Dorsolateral prefrontal cortex (tissue), 120 donors: ENCODE measurements at regions of chr7 and their contacts with region 1.

Region 1: DNA sequence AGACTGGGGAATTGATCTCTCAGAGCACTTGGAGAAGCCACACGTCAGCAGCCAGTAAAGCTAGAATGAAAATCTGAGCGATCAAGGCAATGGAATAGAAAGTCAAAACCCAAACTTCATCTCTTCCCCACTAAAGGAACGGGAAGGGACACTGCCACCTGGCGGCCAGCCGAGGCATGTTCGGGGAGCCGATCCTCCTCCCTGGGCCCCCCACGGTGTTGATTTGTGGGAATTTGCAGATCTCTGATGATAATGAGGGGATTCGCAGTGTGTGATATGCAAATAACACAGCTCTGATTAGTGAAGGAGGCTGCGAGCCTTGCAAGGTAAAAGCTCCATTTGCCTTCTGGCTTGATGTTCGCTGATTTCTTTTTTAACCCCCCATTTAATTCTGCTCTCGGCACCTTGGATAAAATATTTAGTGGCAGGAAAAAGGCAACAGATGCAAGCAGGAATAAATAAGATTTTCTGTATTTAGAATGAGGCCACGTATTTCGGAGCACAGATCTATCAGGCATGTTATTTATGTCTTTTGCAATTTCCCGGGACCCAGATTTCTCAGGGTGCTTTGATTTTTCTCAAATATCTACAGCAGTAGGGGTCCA is 258.6 kb downstream of the PAXIP1 start:
- DNase-seq: peak in 9 of 10 donors; percentile 70 to 84 (median 79)
- H3K4me3 ChIP-seq: peak overlapping the region in 6 of 59 donors; percentile 3 to 34 (median 6)
- H3K27ac ChIP-seq: peak overlapping the region in 54 of 59 donors; percentile 6 to 95 (median 78)
- H3K27me3 ChIP-seq: no peaks in the 10 kb centered on the region
- CTCF ChIP-seq: peak; percentile 64 to 96 (median 90)

Region 2: DNA sequence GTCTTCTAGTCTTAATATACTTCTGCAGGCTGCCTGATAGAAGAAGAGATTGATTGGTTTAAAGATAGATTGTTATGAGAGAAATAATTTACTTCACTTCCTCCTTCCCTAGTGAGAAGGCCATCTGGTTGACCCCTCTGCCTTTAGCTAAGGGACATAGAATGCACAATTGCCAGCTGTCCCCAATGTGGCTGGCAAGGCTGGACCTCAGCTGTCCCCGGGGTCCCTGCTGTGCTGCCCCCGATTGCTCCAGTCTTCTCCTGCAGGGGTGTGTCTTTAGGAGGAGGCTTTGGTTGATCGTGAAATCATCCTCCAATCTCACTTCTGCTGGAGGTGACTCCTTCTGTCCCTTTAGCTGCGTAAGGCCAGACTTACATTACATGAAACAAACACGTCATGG is 303.7 kb before region 1 on chr7:
- intact Hi-C with region 1: no loop called
- DNase-seq: peak in 1 of 10 donors; percentile 35
- H3K4me3 ChIP-seq: no peak overlapping the region
- H3K27ac ChIP-seq: no peak overlapping the region
- H3K27me3 ChIP-seq: no peaks in the 10 kb centered on the region
- CTCF ChIP-seq: no peak

Region 3: GRCh38 chr7:154503962-154504550 is 240.3 kb before region 1 on chr7:
- intact Hi-C with region 1: loop called in 1 of 2 experiments (anchors 10 kb)
- DNase-seq: no peak
- H3K4me3 ChIP-seq: peak overlapping the region in 1 of 59 donors; percentile 10
- H3K27ac ChIP-seq: no peak overlapping the region
- H3K27me3 ChIP-seq: no peaks in the 10 kb centered on the region
- CTCF ChIP-seq: peak; percentile 59 to 91 (median 78)

Region 4: DNA sequence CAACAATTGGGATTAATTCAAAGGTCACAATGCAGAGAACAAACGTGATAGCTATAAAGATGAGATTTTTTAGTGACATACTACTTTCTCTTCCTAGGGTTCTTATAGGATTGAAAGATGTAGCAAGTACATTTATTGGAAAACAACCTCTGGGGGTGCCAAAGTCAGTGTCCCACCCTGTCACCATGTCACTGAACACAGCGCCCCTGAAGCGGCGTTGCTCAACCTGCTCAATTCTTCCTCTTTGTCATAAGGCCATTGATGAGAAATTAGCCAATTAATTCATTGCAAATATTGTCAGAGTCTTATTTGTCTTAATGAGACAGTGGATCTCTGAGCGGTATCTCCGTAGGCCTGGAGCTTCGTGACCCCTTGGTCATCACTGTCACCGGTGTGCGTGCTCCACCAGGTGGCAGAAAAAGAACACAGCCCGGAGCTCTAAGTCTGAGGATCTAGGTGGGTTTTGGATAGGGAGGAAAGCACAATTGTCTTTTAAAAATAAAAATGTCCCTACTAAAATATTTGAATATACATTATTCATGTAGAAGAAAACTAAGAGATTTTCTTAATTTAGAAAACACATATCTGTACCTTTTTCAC is 104.0 kb before region 1 on chr7:
- intact Hi-C with region 1: loop called in 1 of 2 experiments (anchors 10 kb)
- DNase-seq: peak; percentile 43 to 69 (median 50)
- H3K4me3 ChIP-seq: no peak overlapping the region
- H3K27ac ChIP-seq: peak overlapping the region in 1 of 59 donors; percentile 45
- H3K27me3 ChIP-seq: no peaks in the 10 kb centered on the region
- CTCF ChIP-seq: peak; percentile 14 to 84 (median 64)

Region 5: GRCh38 chr7:154698726-154699291 is 45.5 kb before region 1 on chr7:
- intact Hi-C with region 1: loop called in 1 of 2 experiments (anchors 5 kb)
- DNase-seq: no peak
- H3K4me3 ChIP-seq: no peak overlapping the region
- H3K27ac ChIP-seq: no peak overlapping the region
- H3K27me3 ChIP-seq: no peaks in the 10 kb centered on the region
- CTCF ChIP-seq: peak in 51 of 56 donors; percentile 28 to 76 (median 49)

Region 6: DNA sequence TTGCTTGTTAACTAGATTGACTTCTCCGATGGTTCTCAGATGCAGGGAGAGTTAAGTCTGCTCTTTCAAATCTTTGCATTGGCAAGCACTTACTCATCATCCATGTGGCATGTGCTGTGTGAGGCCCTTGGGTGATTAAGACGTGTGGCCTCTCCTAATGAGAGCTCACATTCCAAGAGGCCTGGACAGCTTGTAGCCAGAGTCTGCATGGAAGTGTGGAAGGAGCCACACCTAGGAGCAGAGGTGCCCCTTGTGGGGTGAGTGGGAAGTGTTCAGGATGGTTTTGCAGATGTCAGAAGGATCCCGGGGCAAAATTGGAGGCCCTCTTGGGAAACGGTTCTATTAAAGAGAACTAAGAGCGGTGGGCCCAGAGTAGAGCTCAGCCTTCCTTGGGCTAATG is 32.7 kb after region 1 on chr7:
- intact Hi-C with region 1: loop called (anchors 2 to 5 kb)
- DNase-seq: no peak
- H3K4me3 ChIP-seq: peak overlapping the region in 1 of 59 donors; percentile 13
- H3K27ac ChIP-seq: peak overlapping the region; percentile 86 to 100 (median 97)
- H3K27me3 ChIP-seq: peaks cover 0 to 2% (median 0%) of the 10 kb centered on the region in 45 donors
- CTCF ChIP-seq: peak in 28 of 56 donors; percentile 10 to 50 (median 24)

Region 7: DNA sequence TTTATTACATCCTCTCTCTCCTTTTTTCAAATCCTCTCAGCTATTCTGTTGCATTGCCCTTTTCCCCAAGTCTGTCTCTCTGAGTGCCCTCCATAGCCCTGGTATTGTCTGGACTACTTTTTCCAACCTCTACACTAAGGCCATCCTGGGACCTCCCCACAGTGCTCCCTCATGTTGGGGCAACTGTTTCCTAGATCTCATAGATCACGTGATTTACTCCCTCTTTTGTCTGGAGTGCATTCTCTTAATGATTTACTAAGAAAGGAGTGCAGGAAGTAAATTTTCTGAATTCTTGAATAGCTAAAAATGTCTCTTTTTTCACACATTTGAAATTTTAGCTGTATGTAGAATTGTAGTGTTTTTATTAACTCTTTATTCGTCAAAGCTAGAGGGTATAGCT is 41.5 kb after region 1 on chr7:
- intact Hi-C with region 1: loop called (anchors 2 to 5 kb)
- DNase-seq: no peak
- H3K4me3 ChIP-seq: no peak overlapping the region
- H3K27ac ChIP-seq: peak overlapping the region in 1 of 59 donors; percentile 99
- H3K27me3 ChIP-seq: no peaks in the 10 kb centered on the region
- CTCF ChIP-seq: no peak

Region 8: DNA sequence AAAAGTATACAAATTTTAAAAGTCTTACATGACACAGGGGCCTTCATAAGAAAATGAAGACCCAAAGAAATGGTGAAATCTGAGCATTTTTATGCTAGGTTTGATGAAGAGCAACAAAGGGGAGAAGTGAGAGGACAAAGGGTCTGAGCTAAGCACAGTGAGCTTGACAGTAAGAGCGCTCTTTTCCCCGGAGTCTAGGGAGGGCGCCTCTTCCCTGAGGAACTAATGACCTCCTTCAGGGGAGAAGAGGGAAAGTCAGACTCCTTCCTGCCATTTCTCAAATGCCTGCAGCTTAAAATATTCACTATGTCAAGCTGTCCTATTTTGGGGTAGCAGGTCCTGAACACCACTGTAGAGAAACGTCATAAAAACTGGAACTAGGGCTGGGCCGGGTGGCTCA is 276.6 kb after region 1 on chr7:
- intact Hi-C with region 1: no loop called
- DNase-seq: no peak
- H3K4me3 ChIP-seq: no peak overlapping the region
- H3K27ac ChIP-seq: no peak overlapping the region
- H3K27me3 ChIP-seq: no peaks in the 10 kb centered on the region
- CTCF ChIP-seq: no peak